ENCODE measurements at regions of chr12 and their contacts with region 1.

Region 1: DNA sequence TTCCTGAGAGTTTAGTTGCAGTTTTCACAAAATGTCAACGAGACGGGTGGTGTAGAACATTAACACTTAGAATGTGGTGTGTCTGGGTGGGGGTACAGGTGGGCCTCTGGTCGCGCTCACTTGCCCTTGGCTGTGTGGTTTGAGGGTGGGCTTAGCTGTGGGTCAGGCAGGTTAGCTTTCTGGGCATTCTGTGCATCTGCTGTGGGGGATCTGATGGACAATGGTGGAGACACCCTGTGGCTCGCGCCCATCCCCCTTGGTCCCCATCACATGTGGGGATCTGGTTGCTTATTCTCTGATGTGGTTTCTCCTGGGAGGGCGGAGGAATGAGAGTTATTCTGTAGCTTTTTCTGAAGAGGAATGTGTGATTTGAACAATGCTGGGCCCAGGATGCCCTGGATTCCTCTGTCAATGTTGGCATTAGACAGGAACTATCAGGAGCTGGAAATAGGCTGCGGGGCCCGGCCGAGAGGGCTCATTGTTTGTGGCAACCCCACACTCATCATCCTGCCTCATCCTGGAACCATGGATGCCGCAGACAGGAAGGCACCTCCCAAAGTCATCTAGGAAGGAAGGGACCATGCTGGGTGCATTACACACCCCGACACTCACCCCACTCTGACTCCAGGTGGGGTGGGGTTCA is 101.6 kb downstream of the TSPAN9 start:
- DNase-seq: no peak
- H3K4me3 ChIP-seq: no peak overlapping the region
- H3K27ac ChIP-seq: no peak overlapping the region
- H3K4me1 ChIP-seq: peaks cover 0 to 13% (median 3%) of the 10 kb centered on the region in 4 experiments
- H3K27me3 ChIP-seq: peaks cover 0 to 15% (median 7%) of the 10 kb centered on the region in 5 experiments

Region 2: DNA sequence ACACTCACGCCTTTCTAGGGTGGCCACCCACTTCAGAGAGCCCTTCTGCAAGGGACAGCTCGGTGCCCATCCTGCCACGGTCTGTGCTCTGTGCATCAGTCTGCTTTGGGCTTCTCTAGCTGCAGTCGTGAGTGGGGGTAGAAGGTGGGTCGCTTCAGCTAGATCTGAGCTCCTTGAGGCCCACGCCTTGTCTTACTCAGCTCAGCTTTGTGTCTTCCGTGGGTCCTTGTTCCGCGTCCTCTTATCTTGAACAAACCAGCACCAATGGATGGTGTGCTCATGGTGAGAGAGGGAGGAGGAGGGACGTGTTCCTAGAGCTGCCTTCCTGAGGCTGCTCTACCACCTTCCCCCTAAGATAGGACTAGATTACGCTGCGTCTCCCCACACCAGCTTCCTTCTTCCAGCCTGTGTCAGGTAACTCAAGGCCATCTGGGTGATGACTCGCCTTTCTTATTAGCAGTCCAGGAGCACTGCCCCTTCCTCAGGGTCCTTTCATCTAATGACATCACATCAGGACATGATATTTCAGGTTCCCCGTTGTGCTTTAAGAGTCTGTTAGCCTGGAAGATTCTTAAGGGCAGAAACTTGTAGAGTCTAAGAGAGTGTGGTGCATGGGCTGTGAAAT is 17.2 kb after region 1 on chr12:
- CTCF ChIA-PET with region 1: interaction called, 16 read pairs
- POLR2A ChIA-PET with region 1: interaction called, 3 read pairs
- DNase-seq: peak in 1 of 3 donors; percentile 26
- H3K4me3 ChIP-seq: no peak overlapping the region
- H3K27ac ChIP-seq: no peak overlapping the region
- H3K4me1 ChIP-seq: peaks cover 0 to 21% (median 18%) of the 10 kb centered on the region in 4 experiments
- H3K27me3 ChIP-seq: peaks cover 0 to 54% (median 26%) of the 10 kb centered on the region in 5 experiments

Region 3: GRCh38 chr12:3313675-3314663 is 135.2 kb after region 1 on chr12:
- CTCF ChIA-PET with region 1: no interaction called
- POLR2A ChIA-PET with region 1: no interaction called
- DNase-seq: peak; percentile 44 to 64 (median 62)
- H3K4me3 ChIP-seq: no peak overlapping the region
- H3K27ac ChIP-seq: no peak overlapping the region
- H3K4me1 ChIP-seq: no peaks in the 10 kb centered on the region
- H3K27me3 ChIP-seq: peaks cover 0 to 21% (median 15%) of the 10 kb centered on the region in 5 experiments